Activated naive CD4-positive, alpha-beta T cell treated with anti-CD3 and anti-CD28 coated beads for 36 hours (primary cell): ENCODE measurements at regions of chr3 and their contacts with region 1.

Region 1: GRCh38 chr3:49802719-49803464 is at the start of gene INKA1:
- DNase-seq: peak; percentile 93
- H3K4me3 Mint-ChIP-seq: peak within 1 kb of the TSS; percentile 82
- H3K27ac Mint-ChIP-seq: peak within 1 kb of the TSS; percentile 54
- H3K4me1 Mint-ChIP-seq: peaks cover 41% of the 10 kb centered on the region
- H3K27me3 Mint-ChIP-seq: peaks cover 2% of the 10 kb centered on the region
- total RNA-seq, gene INKA1: 0.33 to 0.37 TPM

Region 2: DNA sequence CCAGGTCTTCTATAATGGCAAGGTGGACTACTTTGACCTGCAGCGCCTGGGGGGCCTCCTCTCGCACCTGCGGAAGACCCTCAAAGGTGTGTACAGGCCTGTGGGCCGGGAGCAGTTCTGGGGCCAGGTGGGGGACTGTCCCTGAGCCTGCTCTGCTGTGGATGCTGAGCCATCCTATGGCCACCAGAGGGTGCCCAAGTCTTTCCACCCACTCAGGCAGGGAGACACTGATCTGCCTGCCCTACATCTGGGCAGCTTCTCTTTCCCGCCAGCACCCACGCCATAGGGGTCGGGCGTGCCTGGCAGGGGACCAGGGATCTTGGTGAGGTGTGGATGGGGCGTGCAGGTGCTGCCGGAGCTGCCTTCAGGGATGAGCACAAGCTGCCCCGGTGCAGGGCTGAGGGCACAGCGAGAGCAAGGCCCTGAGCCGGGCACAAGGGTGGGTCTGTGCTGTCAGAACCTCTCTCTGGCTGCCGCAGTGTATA is 99.4 kb before region 1 on chr3:
- CTCF ChIA-PET with region 1: no interaction called
- intact Hi-C with region 1: loop called (anchors 1 kb)
- DNase-seq: peak; percentile 78
- H3K4me3 Mint-ChIP-seq: no peak overlapping the region
- H3K27ac Mint-ChIP-seq: no peak overlapping the region
- H3K4me1 Mint-ChIP-seq: no peaks in the 10 kb centered on the region
- H3K27me3 Mint-ChIP-seq: no peaks in the 10 kb centered on the region

Region 3: GRCh38 chr3:49750056-49750455 is 52.8 kb before region 1 on chr3:
- CTCF ChIA-PET with region 1: no interaction called
- intact Hi-C with region 1: no loop called
- DNase-seq: no peak
- H3K4me3 Mint-ChIP-seq: no peak overlapping the region
- H3K27ac Mint-ChIP-seq: no peak overlapping the region
- H3K4me1 Mint-ChIP-seq: peaks cover 13% of the 10 kb centered on the region
- H3K27me3 Mint-ChIP-seq: no peaks in the 10 kb centered on the region

Region 4: DNA sequence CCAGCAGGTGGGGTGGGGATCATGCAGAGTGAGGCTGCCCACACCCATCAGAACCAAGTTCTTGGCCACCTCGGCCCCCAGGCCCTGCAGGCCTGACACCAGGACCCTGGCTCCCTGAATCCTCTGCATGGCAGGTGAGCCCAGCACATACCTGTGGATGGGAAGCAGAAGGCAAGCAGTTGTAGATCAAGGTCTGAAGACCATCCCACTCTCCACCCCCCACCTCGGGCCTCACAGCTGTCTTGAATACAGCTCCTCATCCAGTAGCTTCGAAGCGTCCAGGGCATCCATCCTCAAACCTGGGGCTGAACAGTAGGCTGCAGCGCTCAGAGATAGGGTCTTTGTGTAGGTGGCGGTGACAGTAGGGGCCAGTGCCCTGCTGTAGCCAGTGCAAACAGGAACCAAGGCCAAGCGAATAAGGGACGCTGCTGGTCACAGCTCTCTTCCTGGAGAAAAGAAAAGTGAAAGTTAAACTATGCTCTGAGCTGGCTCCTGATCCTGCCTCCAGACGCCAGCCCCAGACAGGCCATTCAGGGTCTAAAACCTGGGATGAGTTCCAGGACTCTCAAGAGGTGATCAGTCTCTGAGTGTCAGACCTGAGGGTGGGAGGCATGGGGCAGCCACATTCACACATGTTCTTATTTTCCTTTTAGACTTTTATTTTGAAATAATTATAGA is 10.7 kb after region 1 on chr3 and contains the start of gene UBA7:
- CTCF ChIA-PET with region 1: interaction called, 21 read pairs
- intact Hi-C with region 1: loop called (anchors 1 kb)
- DNase-seq: peak; percentile 55
- H3K4me3 Mint-ChIP-seq: peak within 1 kb of the TSS; percentile 96
- H3K27ac Mint-ChIP-seq: peak within 1 kb of the TSS; percentile 90
- H3K4me1 Mint-ChIP-seq: peaks cover 18% of the 10 kb centered on the region
- H3K27me3 Mint-ChIP-seq: no peaks in the 10 kb centered on the region
- total RNA-seq, gene UBA7: 93.5 to 97.7 TPM

Region 5: DNA sequence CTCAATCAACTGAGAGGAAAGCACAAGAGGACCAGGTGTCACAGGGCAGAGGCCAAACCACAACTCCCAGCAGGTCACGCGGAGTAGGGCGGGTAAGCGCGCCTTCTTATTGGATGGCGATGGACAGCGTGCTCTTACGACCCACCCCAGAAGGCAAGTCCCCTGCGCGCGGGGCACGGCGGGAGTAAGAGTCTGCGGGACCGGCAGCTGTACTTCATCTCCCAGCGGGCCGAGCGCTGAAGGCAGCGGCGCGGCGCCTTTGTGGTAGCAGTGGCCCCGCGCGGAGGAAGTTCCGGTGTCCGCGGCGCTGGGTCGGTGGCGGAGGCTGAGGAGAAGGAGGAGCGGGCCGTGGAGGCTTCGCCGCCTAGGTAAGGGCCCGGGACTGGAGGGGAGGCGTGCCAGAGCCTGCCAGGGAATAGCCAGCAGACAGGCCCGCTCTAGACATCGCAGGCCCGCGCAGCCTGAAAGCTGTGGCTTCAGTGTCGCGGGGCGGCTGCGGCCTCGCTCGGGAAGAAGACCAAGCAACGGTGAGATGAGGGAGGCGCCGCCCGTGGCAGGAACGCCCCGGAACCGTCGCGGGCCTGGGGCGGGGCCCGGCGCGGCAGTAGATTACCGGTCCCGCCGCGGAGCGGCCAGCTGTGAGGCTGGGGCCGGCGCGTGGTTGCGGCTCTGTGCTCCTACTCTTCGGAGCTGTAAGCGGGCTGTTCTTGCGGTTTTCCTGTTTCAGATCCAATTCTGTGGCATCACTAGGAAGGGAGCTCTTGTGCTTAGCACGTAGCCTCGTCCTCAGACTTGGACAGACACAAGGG is 137.2 kb after region 1 on chr3 and contains the start of gene RBM6:
- CTCF ChIA-PET with region 1: no interaction called
- intact Hi-C with region 1: loop called (anchors 2 kb)
- DNase-seq: peak; percentile 98
- H3K4me3 Mint-ChIP-seq: peak within 1 kb of the TSS; percentile 98
- H3K27ac Mint-ChIP-seq: peak within 1 kb of the TSS; percentile 93
- H3K4me1 Mint-ChIP-seq: peaks cover 29% of the 10 kb centered on the region
- H3K27me3 Mint-ChIP-seq: no peaks in the 10 kb centered on the region
- total RNA-seq, gene RBM6: 89.1 to 98.2 TPM